Breast epithelium (tissue), 4 donors: ENCODE measurements at regions of chr12 and their contacts with region 1.

Region 1: DNA sequence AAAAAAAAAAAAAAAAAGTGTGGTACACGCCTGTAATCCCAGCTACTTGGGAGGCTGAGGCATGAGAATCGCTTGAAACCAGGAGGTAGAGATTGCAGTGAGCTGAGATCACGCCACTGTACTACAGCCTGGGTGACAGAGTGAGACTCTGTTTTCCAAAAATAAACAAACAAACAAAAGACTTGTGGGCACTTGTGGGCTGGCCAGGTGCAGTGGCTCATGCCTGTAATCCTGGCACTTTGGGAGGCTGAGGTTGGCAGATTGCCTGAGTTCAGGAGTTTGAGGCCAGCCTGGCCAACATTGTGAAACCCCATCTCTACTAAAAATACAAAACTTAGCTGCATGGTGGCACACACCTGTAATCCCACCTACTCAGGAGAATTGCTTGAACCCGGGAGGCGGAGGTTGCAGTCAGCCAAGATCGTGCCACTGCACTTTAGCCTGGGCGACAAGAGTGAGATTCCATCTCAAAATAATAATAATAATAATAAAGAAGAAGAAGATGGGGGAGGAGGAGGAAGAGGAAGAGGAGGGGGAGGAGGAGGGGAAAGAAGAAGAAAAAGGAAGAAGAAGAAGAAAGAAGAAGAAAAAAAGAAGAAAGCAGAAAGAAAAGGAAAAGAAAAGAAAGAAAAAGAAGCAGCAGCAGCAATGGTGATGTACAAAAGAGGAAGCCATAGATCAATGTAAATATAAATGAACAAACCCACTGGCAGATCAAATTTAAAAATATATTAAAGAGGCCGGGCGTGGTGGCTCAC is 27.9 kb upstream of the CCNT1 start:
- DNase-seq: no peak
- H3K4me3 ChIP-seq: no peak overlapping the region
- H3K27ac ChIP-seq: no peak overlapping the region
- H3K4me1 ChIP-seq: no peaks in the 10 kb centered on the region
- H3K27me3 ChIP-seq: no peaks in the 10 kb centered on the region
- CTCF ChIP-seq: no peak
- POLR2A ChIP-seq: no peak

Region 2: DNA sequence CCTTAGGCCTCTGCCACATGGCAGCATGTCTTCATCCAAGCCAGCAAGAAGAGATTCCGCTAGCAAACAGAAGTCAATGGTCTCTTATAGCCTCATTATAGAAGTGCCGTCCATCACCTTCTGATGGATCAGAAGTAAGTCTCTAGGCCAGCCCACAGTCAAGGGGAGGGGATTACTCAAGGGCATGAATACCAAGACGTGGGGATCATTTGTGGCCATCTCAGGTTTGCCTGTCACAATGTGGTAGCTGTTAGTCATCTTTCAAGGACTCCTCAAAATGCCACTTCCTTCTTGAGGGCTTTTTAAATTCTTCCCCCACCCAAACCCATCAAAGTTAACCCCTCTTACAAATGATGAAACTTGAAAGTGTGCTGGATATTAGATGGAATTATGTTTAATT is 52.5 kb after region 1 on chr12:
- intact Hi-C with region 1: loop called (anchors 1 kb)
- DNase-seq: no peak
- H3K4me3 ChIP-seq: no peak overlapping the region
- H3K27ac ChIP-seq: no peak overlapping the region
- H3K4me1 ChIP-seq: no peaks in the 10 kb centered on the region
- H3K27me3 ChIP-seq: no peaks in the 10 kb centered on the region
- CTCF ChIP-seq: no peak
- POLR2A ChIP-seq: no peak